T-cell (primary cell): ENCODE measurements at regions of chr1 and their contacts with region 1.

Region 1: GRCh38 chr1:168439456-168440375 is 104.1 kb downstream of the XCL2 start:
- DNase-seq: peak; percentile 63 to 92 (median 78)
- ATAC-seq: peak; percentile 85 to 88 (median 86)
- H3K4me3 ChIP-seq: peak overlapping the region in 1 of 2 donors; percentile 12
- H3K4me3 Mint-ChIP-seq: peak overlapping the region; percentile 62 to 73 (median 71)
- H3K27ac ChIP-seq: peak overlapping the region; percentile 22
- H3K27ac Mint-ChIP-seq: peak overlapping the region; percentile 83 to 89
- H3K4me1 ChIP-seq: peaks cover 11 to 31% of the 10 kb centered on the region in 2 experiments
- H3K4me1 Mint-ChIP-seq: peaks cover 53 to 60% (median 59%) of the 10 kb centered on the region in 3 donors
- H3K27me3 ChIP-seq: no peaks in the 10 kb centered on the region
- H3K27me3 Mint-ChIP-seq: peaks cover 0 to 3% of the 10 kb centered on the region in 2 donors

Region 2: DNA sequence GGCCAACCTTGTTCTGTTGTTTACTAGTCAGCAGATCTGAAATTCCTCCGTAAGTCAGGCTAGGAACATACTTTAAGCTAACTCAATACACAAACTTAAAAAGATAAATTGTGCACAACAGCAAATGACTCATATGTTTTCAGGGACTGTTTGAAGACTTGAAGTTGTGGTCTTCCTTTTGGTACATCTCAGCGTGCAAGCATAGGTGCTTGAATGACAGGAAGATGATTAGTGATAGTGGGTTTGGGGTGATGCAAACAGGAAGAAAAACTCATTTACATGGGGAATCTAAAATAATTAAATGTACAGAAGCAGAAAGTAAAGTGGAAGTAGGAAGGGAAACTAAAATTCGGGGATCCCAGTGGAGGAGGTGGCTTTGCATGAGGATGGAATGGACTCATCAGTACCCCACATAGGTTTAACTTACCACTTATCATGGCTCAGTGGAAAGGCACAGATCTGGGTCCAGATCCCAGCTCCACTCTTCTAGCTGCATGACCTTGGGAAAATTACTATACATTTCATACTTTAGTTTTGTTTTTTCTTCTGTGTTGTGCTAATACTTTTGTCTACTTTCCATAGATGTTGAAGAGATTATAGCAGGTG is 18.2 kb before region 1 on chr1:
- CTCF ChIA-PET with region 1: interaction called in 1 of 2 experiments, 4 read pairs
- POLR2A ChIA-PET with region 1: interaction called in 1 of 2 experiments, 14 read pairs
- DNase-seq: peak in 10 of 35 experiments; percentile 4 to 64 (median 12)
- ATAC-seq: peak; percentile 91 to 99 (median 96)
- H3K4me3 ChIP-seq: no peak overlapping the region
- H3K4me3 Mint-ChIP-seq: peak overlapping the region; percentile 0 to 40 (median 18)
- H3K27ac ChIP-seq: peak overlapping the region; percentile 82
- H3K27ac Mint-ChIP-seq: peak overlapping the region; percentile 88 to 90
- H3K4me1 ChIP-seq: peaks cover 6 to 11% of the 10 kb centered on the region in 2 experiments
- H3K4me1 Mint-ChIP-seq: peaks cover 7 to 40% (median 39%) of the 10 kb centered on the region in 3 donors
- H3K27me3 ChIP-seq: no peaks in the 10 kb centered on the region
- H3K27me3 Mint-ChIP-seq: no peaks in the 10 kb centered on the region

Region 3: GRCh38 chr1:168428063-168428731 is 11.5 kb before region 1 on chr1:
- CTCF ChIA-PET with region 1: interaction called, 3 to 10 read pairs
- POLR2A ChIA-PET with region 1: no interaction called
- DNase-seq: no peak
- ATAC-seq: no peak
- H3K4me3 ChIP-seq: no peak overlapping the region
- H3K4me3 Mint-ChIP-seq: no peak overlapping the region
- H3K27ac ChIP-seq: no peak overlapping the region
- H3K27ac Mint-ChIP-seq: peak overlapping the region in 1 of 2 donors; percentile 6
- H3K4me1 ChIP-seq: no peaks in the 10 kb centered on the region
- H3K4me1 Mint-ChIP-seq: peaks cover 0 to 4% (median 3%) of the 10 kb centered on the region in 3 donors
- H3K27me3 ChIP-seq: no peaks in the 10 kb centered on the region
- H3K27me3 Mint-ChIP-seq: peaks cover 0 to 5% of the 10 kb centered on the region in 2 donors

Region 4: GRCh38 chr1:168603501-168604110 is 163.9 kb after region 1 on chr1:
- CTCF ChIA-PET with region 1: interaction called in 1 of 2 experiments, 14 read pairs
- POLR2A ChIA-PET with region 1: no interaction called
- DNase-seq: peak; percentile 27 to 79 (median 62)
- ATAC-seq: peak; percentile 66 to 87 (median 77)
- H3K4me3 ChIP-seq: no peak overlapping the region
- H3K4me3 Mint-ChIP-seq: no peak overlapping the region
- H3K27ac ChIP-seq: no peak overlapping the region
- H3K27ac Mint-ChIP-seq: no peak overlapping the region
- H3K4me1 ChIP-seq: no peaks in the 10 kb centered on the region
- H3K4me1 Mint-ChIP-seq: no peaks in the 10 kb centered on the region
- H3K27me3 ChIP-seq: no peaks in the 10 kb centered on the region
- H3K27me3 Mint-ChIP-seq: peaks cover 1 to 4% of the 10 kb centered on the region in 2 donors